ENCODE measurements at regions of chr10 and their contacts with region 1.

Region 1: GRCh38 chr10:91643700-91644099 is 10.8 kb upstream of the PPP1R3C start:
- DNase-seq: no peak
- ATAC-seq: peak; percentile 32; the same call in 1 of the 2 replicates
- H3K4me3 ChIP-seq: no peak overlapping the region
- H3K27ac ChIP-seq: no peak overlapping the region
- H3K4me1 ChIP-seq: peaks cover 9% of the 10 kb centered on the region
- H3K27me3 ChIP-seq: no peaks in the 10 kb centered on the region
- CTCF ChIP-seq: peak; percentile 26; the same call in 1 of the 2 replicates
- POLR2A ChIP-seq: no peak
- RAD21 ChIP-seq: peak; percentile 26; the same call in 1 of the 2 replicates

Region 2: GRCh38 chr10:91420868-91421267 is 222.8 kb before region 1 on chr10:
- CTCF ChIA-PET with region 1: no interaction called
- POLR2A ChIA-PET with region 1: interaction called, 27 read pairs
- dilution Hi-C with region 1: no loop called
- in situ Hi-C with region 1: no loop called
- intact Hi-C with region 1: no loop called
- DNase-seq: peak; percentile 62
- ATAC-seq: peak; percentile 69
- H3K4me3 ChIP-seq: no peak overlapping the region; the same call in 1 of the 2 replicates
- H3K27ac ChIP-seq: no peak overlapping the region
- H3K4me1 ChIP-seq: no peaks in the 10 kb centered on the region
- H3K27me3 ChIP-seq: no peaks in the 10 kb centered on the region
- CTCF ChIP-seq: no peak
- POLR2A ChIP-seq: no peak
- RAD21 ChIP-seq: no peak

Region 3: DNA sequence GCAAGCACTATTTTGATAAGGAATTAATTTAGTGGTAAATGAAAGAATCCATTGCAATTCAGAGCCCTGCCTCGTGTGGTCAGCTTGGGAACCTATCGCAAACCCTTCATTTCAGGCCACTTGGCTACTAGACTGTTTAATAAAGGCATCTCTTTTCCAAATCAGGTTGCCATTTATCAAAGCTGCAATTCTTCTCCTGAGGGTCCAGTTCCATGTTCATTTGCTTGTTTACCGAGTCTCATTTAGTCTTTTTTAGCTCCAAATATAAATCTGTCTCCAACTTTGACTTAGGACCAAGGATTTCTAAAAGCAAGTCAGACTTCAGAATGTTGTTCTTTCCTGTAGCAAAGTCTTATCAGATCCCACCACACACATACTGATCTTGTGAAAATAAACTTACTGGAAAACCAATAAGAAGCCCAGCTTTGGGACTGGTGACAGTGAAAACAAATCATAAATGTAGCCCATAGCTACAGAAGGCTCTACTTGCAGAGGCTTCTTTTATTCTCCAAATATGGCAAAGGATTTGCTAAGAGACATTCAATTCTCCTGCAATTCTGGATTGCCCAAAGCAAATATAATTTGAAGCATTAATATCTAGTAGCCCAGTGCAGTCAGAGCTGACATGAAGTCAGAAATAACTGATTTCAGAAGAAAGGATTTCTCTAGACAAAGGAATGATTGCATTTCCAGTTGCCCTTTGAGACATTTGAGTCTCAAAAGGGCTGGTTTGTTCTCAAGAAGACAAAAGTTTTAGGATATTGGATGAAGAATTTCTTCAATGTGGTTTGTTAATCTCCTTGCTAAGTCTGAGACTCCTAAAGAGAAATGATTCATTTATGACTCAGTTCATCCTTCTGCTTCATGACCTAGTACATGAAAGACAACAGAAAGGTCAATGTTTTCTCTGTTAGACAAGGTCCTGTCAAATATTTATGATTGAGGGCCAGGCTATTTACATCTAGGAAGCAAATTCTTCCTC is 38.9 kb before region 1 on chr10:
- CTCF ChIA-PET with region 1: no interaction called
- POLR2A ChIA-PET with region 1: no interaction called
- dilution Hi-C with region 1: no loop called
- in situ Hi-C with region 1: no loop called
- intact Hi-C with region 1: no loop called
- DNase-seq: peak; percentile 79
- ATAC-seq: peak; percentile 51
- H3K4me3 ChIP-seq: no peak overlapping the region
- H3K27ac ChIP-seq: peak overlapping the region; percentile 68; the same call in 1 of the 2 replicates
- H3K4me1 ChIP-seq: peaks cover 22% of the 10 kb centered on the region
- H3K27me3 ChIP-seq: no peaks in the 10 kb centered on the region
- CTCF ChIP-seq: peak; percentile 26; the same call in 1 of the 2 replicates
- POLR2A ChIP-seq: no peak
- RAD21 ChIP-seq: no peak